Activated CD4-positive, alpha-beta T cell treated with anti-CD3 and anti-CD28 coated beads for 36 hours (primary cell): ENCODE measurements at regions of chr5 and their contacts with region 1.

Region 1: GRCh38 chr5:177403792-177404640 is 3.6 kb upstream of the PFN3 start:
- DNase-seq: peak; percentile 91
- ATAC-seq: peak; percentile 84
- H3K4me3 Mint-ChIP-seq: peak overlapping the region; percentile 72
- H3K27ac Mint-ChIP-seq: peak overlapping the region; percentile 42
- H3K4me1 Mint-ChIP-seq: peaks cover 27% of the 10 kb centered on the region
- H3K27me3 Mint-ChIP-seq: peaks cover 14% of the 10 kb centered on the region

Region 2: GRCh38 chr5:177311723-177312648 is 92.0 kb before region 1 on chr5 and contains the start of gene MXD3:
- CTCF ChIA-PET with region 1: interaction called, 47 read pairs
- POLR2A ChIA-PET with region 1: no interaction called
- intact Hi-C with region 1: loop called (anchors 1 to 5 kb)
- DNase-seq: peak; percentile 99
- ATAC-seq: peak; percentile 88
- H3K4me3 Mint-ChIP-seq: peak within 1 kb of the TSS; percentile 85
- H3K27ac Mint-ChIP-seq: peak within 1 kb of the TSS; percentile 84
- H3K4me1 Mint-ChIP-seq: peaks cover 28% of the 10 kb centered on the region
- H3K27me3 Mint-ChIP-seq: no peaks in the 10 kb centered on the region
- total RNA-seq, gene MXD3: 21.3 to 27.2 TPM

Region 3: GRCh38 chr5:177351385-177352329 is 52.4 kb before region 1 on chr5 and contains the start of gene LMAN2:
- CTCF ChIA-PET with region 1: interaction called, 34 read pairs
- POLR2A ChIA-PET with region 1: no interaction called
- intact Hi-C with region 1: loop called in 1 of 2 experiments (anchors 2 kb)
- DNase-seq: peak; percentile 95
- ATAC-seq: peak; percentile 99
- H3K4me3 Mint-ChIP-seq: peak within 1 kb of the TSS; percentile 89
- H3K27ac Mint-ChIP-seq: peak within 1 kb of the TSS; percentile 99
- H3K4me1 Mint-ChIP-seq: peaks cover 48% of the 10 kb centered on the region
- H3K27me3 Mint-ChIP-seq: no peaks in the 10 kb centered on the region
- total RNA-seq, gene LMAN2: 74.5 to 92.1 TPM

Region 4: DNA sequence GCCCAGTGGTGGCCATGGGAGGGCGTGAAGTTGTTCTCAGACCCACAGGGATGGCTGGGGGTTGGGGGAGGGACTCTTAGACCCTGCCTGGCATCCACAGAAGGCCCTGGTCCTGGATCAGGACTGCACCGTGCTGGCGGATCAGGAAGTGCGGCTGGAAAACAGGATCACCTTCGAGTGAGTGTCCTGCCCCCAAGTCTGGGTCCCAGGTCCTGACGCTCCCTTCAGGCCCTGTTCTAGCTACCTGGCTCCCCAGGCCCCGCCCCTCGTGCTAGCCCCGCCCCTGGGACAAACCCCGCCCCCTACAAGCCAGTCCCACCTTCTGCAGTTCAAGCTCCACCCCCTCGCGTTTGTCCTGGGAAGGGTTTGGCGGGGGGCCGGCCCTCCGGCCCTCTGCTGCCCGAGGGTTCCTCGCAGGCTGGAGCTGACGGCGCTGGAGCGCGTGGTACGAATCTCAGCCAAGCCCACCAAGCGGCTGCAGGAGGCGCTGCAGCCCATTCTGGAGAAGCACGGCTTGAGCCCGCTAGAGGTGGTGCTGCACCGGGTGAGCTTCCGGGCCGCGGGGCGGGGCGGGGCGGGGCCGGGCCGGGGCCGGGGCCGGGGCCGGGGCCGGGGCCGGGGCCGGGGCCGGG is 33.4 kb before region 1 on chr5:
- CTCF ChIA-PET with region 1: interaction called, 19 read pairs
- POLR2A ChIA-PET with region 1: no interaction called
- intact Hi-C with region 1: no loop called
- DNase-seq: peak; percentile 76
- ATAC-seq: peak; percentile 66
- H3K4me3 Mint-ChIP-seq: peak overlapping the region; percentile 53
- H3K27ac Mint-ChIP-seq: no peak overlapping the region
- H3K4me1 Mint-ChIP-seq: peaks cover 70% of the 10 kb centered on the region
- H3K27me3 Mint-ChIP-seq: no peaks in the 10 kb centered on the region

Region 5: GRCh38 chr5:177431317-177432142 is 27.5 kb after region 1 on chr5:
- CTCF ChIA-PET with region 1: interaction called, 81 read pairs
- POLR2A ChIA-PET with region 1: interaction called, 17 read pairs
- intact Hi-C with region 1: loop called (anchors 1 kb)
- DNase-seq: peak; percentile 81
- ATAC-seq: peak; percentile 19
- H3K4me3 Mint-ChIP-seq: peak overlapping the region; percentile 88
- H3K27ac Mint-ChIP-seq: peak overlapping the region; percentile 94
- H3K4me1 Mint-ChIP-seq: peaks cover 73% of the 10 kb centered on the region
- H3K27me3 Mint-ChIP-seq: no peaks in the 10 kb centered on the region

Region 6: GRCh38 chr5:177497292-177498033 is 93.4 kb after region 1 on chr5 and contains the start of gene PDLIM7:
- CTCF ChIA-PET with region 1: interaction called, 23 read pairs
- POLR2A ChIA-PET with region 1: no interaction called
- intact Hi-C with region 1: loop called in 1 of 2 experiments (anchors 1 kb)
- DNase-seq: peak; percentile 98
- ATAC-seq: peak; percentile 86
- H3K4me3 Mint-ChIP-seq: peak within 1 kb of the TSS; percentile 73
- H3K27ac Mint-ChIP-seq: peak within 1 kb of the TSS; percentile 37
- H3K4me1 Mint-ChIP-seq: peaks cover 31% of the 10 kb centered on the region
- H3K27me3 Mint-ChIP-seq: peaks cover 12% of the 10 kb centered on the region
- total RNA-seq, gene PDLIM7: 41.9 to 50.2 TPM